Naive thymus-derived CD8-positive, alpha-beta T cell (primary cell): ENCODE measurements at regions of chr17 and their contacts with region 1.

Region 1: GRCh38 chr17:4986951-4987766 is at the start of gene CAMTA2:
- DNase-seq: peak; percentile 81 to 93 (median 84)
- ATAC-seq: peak; percentile 89
- H3K4me3 Mint-ChIP-seq: peak within 1 kb of the TSS; percentile 83 to 97 (median 91)
- H3K27ac Mint-ChIP-seq: peak within 1 kb of the TSS; percentile 85 to 97 (median 95)
- H3K4me1 Mint-ChIP-seq: peaks cover 30 to 49% (median 42%) of the 10 kb centered on the region in 4 donors
- H3K27me3 Mint-ChIP-seq: no peaks in the 10 kb centered on the region
- polyA plus RNA-seq, gene CAMTA2: 4.1 to 18.9 (median 6.3) TPM

Region 2: GRCh38 chr17:4872786-4873185 is 114.4 kb before region 1 on chr17:
- POLR2A ChIA-PET with region 1: no interaction called
- DNase-seq: no peak
- ATAC-seq: no peak
- H3K4me3 Mint-ChIP-seq: no peak overlapping the region
- H3K27ac Mint-ChIP-seq: no peak overlapping the region
- H3K4me1 Mint-ChIP-seq: peaks cover 0 to 15% (median 11%) of the 10 kb centered on the region in 4 donors
- H3K27me3 Mint-ChIP-seq: no peaks in the 10 kb centered on the region

Region 3: DNA sequence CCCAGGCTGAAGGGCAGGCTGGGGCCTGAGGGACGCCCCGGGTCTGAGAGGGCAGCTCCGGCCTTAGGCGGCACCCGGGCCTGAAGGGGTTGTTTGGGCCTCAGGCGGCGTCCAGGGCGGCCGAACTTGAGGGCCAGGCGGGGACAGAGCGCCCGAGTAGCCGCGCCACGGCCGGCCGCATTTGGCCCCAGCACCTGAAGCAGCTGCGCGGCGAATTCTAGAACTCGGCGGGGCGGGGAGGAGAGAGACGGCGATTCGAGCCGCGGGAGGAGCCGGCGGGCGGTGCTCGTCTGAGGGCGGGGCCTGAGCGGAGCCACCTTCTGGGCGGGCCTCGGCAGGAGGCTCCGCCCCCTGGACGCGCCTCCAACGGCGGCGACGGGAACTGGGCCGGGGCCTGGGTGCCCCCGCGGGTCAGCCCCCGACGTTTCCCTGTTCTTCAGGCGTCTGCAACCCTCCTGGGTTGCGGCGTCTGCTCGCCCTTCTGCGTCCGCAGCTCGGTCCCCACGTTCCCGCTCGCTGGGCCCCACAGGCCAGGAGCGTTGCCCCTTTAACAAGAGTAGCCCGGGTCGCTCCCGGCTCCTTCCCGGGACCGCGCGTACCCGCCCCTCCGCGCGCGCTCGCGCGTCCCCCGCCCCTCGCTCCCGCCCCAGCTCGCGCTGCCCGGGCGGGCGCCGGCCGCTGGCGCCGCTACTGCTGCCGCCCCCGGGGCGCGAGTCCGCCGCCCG is 10.3 kb after region 1 on chr17 and contains the starts of genes INCA1 and KIF1C:
- POLR2A ChIA-PET with region 1: interaction called, 20 read pairs
- DNase-seq: peak; percentile 82 to 96 (median 90)
- ATAC-seq: peak; percentile 91 to 95
- H3K4me3 Mint-ChIP-seq: peak within 1 kb of the TSS; percentile 76 to 91 (median 84)
- H3K27ac Mint-ChIP-seq: peak within 1 kb of the TSS; percentile 66 to 95 (median 86)
- H3K4me1 Mint-ChIP-seq: peaks cover 17 to 29% (median 20%) of the 10 kb centered on the region in 4 donors
- H3K27me3 Mint-ChIP-seq: no peaks in the 10 kb centered on the region
- polyA plus RNA-seq, gene INCA1: 0.23 TPM in 1 of 3 donors, not detected in the others
- polyA plus RNA-seq, gene KIF1C: 2.6 to 3.0 (median 3.0) TPM